Prostate gland (tissue), 2 donors: ENCODE measurements at regions of chr19 and their contacts with region 1.

Region 1: GRCh38 chr19:55141696-55142095 is 7.3 kb downstream of the TNNT1 start:
- DNase-seq: no peak
- H3K4me3 ChIP-seq: no peak overlapping the region
- H3K27ac ChIP-seq: no peak overlapping the region
- H3K4me1 ChIP-seq: peaks cover 4% of the 10 kb centered on the region
- H3K27me3 ChIP-seq: peaks cover 42% of the 10 kb centered on the region
- CTCF ChIP-seq: no peak
- POLR2A ChIP-seq: no peak

Region 2: DNA sequence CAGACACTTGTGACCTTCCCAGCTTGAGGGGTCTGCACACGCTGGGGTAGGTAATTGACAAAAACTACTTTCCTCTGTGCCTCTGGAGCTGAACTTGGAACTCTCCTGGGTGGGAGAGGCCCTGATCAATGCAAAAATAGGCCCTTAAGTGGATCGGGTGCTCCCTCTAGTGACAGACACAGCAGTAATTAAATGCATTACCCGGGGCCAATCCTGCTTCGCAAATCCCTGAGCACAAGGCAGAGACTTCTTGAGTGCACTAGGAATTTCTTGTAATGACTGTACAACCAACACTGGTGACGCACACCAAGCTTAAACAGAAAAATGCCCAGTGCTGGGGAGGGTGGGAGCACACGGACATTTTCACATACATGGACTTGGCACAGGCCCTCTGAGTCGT is 276.5 kb after region 1 on chr19:
- intact Hi-C with region 1: loop called (anchors 5 kb)
- DNase-seq: peak; percentile 48
- H3K4me3 ChIP-seq: no peak overlapping the region
- H3K27ac ChIP-seq: no peak overlapping the region
- H3K4me1 ChIP-seq: no peaks in the 10 kb centered on the region
- H3K27me3 ChIP-seq: no peaks in the 10 kb centered on the region
- CTCF ChIP-seq: peak; percentile 15 to 75 (median 62)
- POLR2A ChIP-seq: no peak